ENCODE measurements at regions of chr1 and their contacts with region 1.

Region 1: DNA sequence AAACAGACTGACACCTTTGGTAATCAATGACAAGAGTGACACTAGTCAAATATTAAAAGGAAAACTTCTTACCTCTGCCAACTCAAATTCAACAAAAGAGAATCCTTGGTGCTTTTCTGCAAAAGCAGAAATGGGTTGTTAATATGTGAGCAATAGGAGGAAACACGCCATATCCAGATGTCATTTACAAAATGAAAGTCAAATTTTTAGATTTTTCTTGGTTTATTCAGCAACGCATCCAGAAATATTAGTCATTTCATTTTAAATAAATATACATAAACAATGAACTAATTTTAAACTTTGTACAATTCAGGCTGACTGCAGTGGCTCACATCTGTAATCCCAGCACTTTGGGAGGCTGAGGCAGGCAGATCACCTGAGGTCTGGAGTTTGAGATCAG is 22.3 kb downstream of the PABPC4 start:
- DNase-seq: no peak
- H3K4me3 ChIP-seq: no peak overlapping the region
- H3K27ac ChIP-seq: no peak overlapping the region
- H3K4me1 ChIP-seq: no peaks in the 10 kb centered on the region
- H3K27me3 ChIP-seq: no peaks in the 10 kb centered on the region
- CTCF ChIP-seq: no peak

Region 2: GRCh38 chr1:38929476-38929875 is 624.8 kb before region 1 on chr1:
- CTCF ChIA-PET with region 1: no interaction called
- POLR2A ChIA-PET with region 1: interaction called, 18 read pairs
- intact Hi-C with region 1: no loop called
- DNase-seq: no peak
- H3K4me3 ChIP-seq: no peak overlapping the region
- H3K27ac ChIP-seq: no peak overlapping the region
- H3K4me1 ChIP-seq: no peaks in the 10 kb centered on the region
- H3K27me3 ChIP-seq: no peaks in the 10 kb centered on the region
- CTCF ChIP-seq: no peak

Region 3: GRCh38 chr1:39538588-39539465 is 15.4 kb before region 1 on chr1:
- CTCF ChIA-PET with region 1: interaction called, 12 read pairs
- POLR2A ChIA-PET with region 1: no interaction called
- intact Hi-C with region 1: no loop called
- DNase-seq: peak in 1 of 2 experiments; percentile 60
- H3K4me3 ChIP-seq: no peak overlapping the region
- H3K27ac ChIP-seq: no peak overlapping the region
- H3K4me1 ChIP-seq: no peaks in the 10 kb centered on the region
- H3K27me3 ChIP-seq: no peaks in the 10 kb centered on the region
- CTCF ChIP-seq: peak; percentile 86

Region 4: DNA sequence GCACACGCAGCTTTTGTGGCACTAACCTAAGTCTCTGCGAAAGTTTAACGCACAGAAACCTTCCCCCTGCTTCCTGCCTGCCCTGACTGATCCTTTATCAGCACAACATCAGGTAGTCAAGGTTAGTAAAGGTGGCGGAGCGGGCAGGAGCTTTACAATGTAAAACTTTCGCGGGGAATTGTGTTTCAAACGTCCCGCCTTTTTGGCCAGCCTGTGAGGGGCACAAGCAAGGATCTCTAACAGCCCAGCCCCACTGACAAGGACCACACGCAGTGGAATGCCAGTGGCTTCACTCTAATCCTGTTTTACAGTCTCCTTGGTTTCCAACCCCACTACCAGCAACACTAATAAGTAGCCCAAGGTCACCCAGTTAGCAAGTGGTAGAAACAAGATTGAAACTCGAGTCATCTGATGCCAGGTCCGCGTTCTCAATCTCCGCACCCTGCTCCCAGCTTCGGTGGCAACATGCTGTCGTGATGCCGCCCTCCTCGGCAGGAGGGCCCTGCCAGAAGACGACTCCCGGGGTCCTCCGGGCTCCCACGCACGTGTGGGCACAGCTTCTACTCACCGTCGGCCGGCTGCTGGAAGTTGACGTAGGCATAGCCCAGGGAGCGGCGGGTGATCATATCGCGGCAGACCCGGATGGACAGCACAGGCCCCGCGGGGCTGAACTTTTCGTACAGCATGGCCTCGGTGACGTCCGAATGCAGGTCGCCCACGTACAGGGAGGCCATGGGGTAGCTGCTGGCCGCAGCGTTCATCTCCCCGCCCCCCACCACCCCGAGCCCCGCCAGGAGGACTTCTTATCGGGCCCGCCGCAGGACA is 21.1 kb after region 1 on chr1:
- CTCF ChIA-PET with region 1: no interaction called
- POLR2A ChIA-PET with region 1: interaction called, 13 read pairs
- intact Hi-C with region 1: no loop called
- DNase-seq: peak in 1 of 2 experiments; percentile 33
- H3K4me3 ChIP-seq: peak overlapping the region; percentile 76
- H3K27ac ChIP-seq: 0 out of 2 replicates have a peak overlapping the region, but pooled peaks have one; percentile 39
- H3K4me1 ChIP-seq: peaks cover 26% of the 10 kb centered on the region
- H3K27me3 ChIP-seq: no peaks in the 10 kb centered on the region
- CTCF ChIP-seq: no peak

Measured in PC-9 (cell line).